Cardiac septum (tissue), 1 donor: ENCODE measurements at regions of chr1 and their contacts with region 1.

Region 1: DNA sequence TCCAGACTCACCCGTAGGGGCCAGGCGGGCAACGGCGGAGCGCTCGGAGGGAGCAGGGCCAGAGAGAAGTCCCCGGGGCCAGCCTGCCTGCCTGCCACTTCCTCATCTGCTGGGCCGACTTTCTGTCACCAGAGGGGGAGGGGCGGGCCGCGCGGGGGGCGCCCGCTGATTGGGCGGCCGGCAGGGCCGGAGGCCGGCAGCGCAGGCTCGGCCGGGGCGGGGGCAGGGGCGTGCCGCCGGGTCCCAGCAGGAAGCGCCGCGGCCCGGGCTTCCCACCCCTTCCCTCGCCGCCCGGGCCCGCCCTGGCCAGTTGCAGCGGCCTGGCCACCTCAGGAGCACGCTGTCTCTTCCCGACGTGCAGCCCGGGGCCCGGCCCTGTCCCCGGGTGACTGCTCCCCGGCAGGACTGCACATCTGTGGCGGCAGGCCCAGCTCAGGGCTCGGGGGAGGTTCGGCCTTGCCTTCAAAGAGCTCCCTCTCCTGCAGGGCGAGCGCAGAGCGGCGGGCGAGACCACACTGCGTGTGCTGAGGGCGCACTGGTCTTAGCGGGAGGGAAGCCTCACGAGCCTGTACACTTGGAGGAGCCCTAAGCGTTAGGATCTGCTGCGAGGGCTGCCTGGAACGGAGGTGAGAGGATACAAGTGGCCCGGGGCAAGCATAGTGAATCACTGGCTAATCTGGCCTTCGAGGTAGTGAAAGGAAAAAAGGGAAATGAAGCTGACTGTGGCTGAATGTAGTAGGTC is at the start of gene ELOVL1:
- DNase-seq: peak; percentile 97
- total RNA-seq, gene ELOVL1: 37.8 TPM

Region 2: DNA sequence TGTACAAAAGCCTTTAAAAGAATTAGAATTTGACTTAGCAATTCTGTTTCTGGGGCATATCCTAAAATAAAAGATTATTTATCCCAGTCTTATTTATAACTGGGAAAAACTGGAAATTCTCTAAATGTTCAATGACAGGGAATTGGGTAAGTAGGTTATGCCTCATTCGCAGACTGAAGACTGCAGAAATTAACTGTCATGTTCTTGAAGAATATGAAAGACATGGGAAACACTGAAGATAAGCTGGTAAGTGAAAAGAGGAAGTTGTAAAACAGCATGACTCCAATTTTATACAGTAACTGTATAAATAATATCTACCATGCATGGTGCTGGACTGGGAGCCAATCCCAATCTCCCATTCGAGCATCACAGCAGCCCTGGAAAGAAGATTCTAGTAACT is 358.8 kb before region 1 on chr1:
- intact Hi-C with region 1: no loop called
- DNase-seq: no peak

Region 3: DNA sequence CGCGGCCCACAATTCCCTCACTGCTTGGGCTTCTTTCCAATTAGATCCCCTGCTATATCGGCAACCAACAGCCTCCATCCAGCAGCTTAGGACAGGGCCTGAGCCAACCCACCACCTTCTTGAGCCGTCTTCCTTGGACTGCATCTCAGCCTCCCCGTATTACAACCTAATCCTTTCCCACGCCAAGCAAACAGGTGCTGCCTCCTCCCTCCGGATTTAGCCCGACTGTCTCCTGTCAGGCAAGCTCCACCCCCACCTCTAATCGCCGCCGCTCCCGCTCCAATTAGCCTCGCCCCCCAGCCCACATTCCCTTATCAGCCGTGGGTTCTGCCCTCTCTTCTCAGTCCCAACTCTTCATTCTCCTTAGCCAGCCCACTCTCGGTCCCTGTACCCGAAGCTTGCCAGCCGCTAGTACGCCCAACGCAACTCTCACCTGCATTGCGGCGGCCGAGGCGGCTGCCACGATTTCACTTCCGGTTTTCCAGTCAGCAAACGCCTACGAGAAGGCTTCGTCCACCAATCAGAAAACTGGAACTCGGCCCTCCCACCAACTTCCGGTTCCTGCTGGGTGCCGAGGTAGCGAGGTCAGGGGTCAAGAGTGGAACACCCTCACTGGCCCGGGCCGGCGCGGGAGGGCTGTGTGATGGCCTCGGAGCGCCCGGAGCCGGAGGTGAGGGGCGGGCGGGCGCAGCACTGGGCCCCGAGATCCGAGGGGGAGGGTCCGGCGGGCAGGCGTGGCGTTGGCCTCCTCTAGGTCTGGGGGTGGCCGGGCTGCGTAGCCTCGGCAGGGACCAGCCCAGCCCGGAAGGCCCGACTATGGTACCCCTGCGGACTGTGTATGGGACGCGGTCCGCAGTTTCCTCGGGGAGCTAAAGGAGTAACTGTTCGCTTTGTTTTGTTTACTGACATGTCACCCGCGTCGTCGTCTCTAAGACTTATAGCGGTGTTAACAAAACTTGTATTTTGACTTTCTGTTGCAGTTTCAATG is 21.5 kb after region 1 on chr1 and contains the starts of genes MED8 and SZT2:
- intact Hi-C with region 1: loop called (anchors 1 kb)
- DNase-seq: peak; percentile 97
- total RNA-seq, gene MED8: 17.9 TPM
- total RNA-seq, gene SZT2: 35.7 TPM

Region 4: DNA sequence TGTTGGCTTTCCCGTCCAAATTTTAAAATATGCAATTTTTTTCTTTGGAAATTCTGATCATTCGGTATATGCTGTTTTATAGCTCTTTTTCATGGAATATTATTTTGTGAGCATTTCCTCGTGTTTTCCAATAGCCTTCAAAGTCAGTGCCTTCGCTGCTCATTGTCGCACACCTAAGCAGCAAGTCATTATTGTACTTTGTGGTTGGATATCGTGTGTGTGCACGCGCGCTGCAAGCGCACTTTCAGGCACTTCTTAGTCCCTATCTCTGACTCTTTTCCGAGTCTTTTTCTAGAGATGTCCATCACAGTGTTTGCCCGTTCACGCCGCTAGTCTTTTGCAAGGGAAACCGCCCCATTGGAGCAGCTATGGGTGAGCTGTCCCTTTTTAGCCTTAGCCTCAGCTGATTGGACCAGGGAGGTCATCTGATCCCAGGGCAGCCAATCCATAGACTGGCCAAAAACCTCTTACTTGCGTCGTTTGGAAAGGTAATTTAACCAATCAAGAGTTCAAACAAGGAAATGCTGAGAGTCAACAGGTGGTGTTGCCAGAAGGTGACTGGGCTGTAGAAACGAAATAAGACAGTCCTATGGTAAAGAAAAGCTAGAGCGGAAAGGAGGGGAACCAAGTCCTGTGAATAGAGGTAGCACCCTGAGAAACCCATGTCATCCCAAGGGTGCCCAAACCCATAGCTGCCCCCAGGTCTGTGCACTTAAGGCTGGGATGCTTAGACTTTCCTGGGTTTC is 86.4 kb after region 1 on chr1:
- intact Hi-C with region 1: loop called (anchors 5 kb)
- DNase-seq: peak; percentile 86

Region 5: GRCh38 chr1:43757343-43758053 is 389.4 kb after region 1 on chr1:
- intact Hi-C with region 1: no loop called
- DNase-seq: no peak